ENCODE measurements at regions of chr7 and their contacts with region 1.

Region 1: DNA sequence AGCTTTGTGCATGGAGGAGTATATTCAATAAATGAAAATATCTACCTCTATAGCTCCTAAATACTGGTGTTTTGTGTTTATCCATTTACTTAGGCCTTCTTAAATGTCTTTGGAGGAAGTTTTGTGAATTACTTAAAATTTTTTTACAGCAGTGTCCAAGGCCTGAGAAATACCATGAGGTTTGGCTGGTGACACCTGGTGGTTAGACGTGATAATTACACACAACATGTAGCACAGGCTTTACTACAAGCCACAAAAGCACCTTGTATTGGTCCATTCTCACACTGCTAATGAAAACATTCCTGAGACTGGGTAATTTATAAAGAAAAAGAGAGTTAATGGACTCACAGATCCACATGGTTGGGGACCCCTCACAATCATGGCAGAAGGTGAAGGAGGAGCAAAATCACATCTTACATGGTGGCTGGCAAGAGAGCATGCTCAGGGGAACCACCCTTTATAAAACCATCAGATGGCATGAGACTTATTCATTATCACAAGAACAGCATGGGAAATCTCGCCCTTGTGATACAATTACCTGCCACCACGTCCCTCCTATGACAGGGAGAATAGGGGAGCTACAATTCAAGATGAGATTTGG is 20.6 kb downstream of the HYAL4 start:
- DNase-seq: peak; percentile 78
- H3K4me3 ChIP-seq: no peak overlapping the region
- H3K27ac ChIP-seq: peak overlapping the region; percentile 67
- H3K4me1 ChIP-seq: no peaks in the 10 kb centered on the region
- H3K27me3 ChIP-seq: no peaks in the 10 kb centered on the region
- CTCF ChIP-seq: peak; percentile 73

Region 2: GRCh38 chr7:123494193-123494796 is 371.3 kb before region 1 on chr7:
- intact Hi-C with region 1: loop called (anchors 10 kb)
- DNase-seq: peak; percentile 31
- H3K4me3 ChIP-seq: no peak overlapping the region
- H3K27ac ChIP-seq: no peak overlapping the region
- H3K4me1 ChIP-seq: no peaks in the 10 kb centered on the region
- H3K27me3 ChIP-seq: no peaks in the 10 kb centered on the region
- CTCF ChIP-seq: peak; percentile 63

Region 3: DNA sequence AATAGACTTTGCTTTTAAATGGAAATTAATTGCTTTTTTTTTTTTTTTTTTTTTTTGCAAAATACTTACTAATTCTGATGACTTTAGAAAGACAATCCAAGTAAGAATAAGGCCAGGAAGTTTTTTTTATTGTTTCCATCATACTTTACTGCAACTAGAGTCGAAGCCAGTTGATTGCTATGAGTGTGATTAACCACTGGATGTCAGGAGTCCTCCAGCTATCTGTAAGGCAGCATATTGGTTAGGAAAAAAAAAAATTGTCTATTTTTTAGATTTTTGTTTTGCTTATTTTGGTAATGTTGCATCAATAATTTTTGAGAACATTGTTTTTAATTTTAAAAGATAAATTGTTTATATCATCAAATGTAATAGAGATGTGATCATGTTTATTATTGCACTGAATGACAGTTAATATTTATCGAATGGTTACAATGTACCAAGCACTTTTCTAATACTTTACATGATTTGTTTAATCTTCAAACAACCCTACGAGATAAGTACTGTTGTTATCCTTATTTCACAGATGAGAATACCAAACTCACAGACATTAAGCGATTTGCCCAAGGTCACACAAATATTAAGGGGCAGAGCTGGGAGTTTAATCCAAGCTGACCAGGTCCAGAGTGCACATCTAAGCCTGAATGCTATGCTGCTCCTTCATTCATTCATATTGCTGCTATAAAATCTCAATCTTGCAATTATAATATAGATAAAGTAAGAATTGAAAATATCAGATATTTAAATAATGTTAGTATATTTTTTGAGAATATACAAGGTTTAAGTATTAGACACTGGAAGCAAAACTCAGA is 229.9 kb before region 1 on chr7:
- intact Hi-C with region 1: loop called (anchors 5 kb)
- DNase-seq: no peak
- H3K4me3 ChIP-seq: no peak overlapping the region
- H3K27ac ChIP-seq: no peak overlapping the region
- H3K4me1 ChIP-seq: no peaks in the 10 kb centered on the region
- H3K27me3 ChIP-seq: peaks cover 3% of the 10 kb centered on the region
- CTCF ChIP-seq: peak; percentile 18

Region 4: DNA sequence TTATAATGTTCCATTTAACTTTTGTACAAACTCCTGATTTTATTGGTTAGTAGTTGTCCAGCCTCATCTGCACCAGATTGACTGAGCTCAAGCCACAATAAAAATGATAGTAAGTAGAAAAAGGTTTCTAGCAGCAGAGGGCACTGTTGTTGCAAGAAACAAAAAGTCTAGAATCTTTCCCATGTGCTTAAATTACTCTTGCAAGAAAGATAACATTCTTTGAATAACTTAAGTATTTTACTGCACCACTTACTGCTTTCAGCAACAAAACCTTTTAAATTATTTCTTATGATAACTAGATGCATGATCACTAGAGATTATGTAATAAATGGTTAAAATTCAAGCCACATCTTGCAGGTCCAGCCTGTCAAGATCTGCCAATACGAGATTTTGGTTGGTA is 182.9 kb before region 1 on chr7:
- intact Hi-C with region 1: loop called (anchors 5 kb)
- DNase-seq: peak; percentile 36
- H3K4me3 ChIP-seq: no peak overlapping the region
- H3K27ac ChIP-seq: no peak overlapping the region
- H3K4me1 ChIP-seq: no peaks in the 10 kb centered on the region
- H3K27me3 ChIP-seq: no peaks in the 10 kb centered on the region
- CTCF ChIP-seq: peak; percentile 48

Region 5: GRCh38 chr7:123805287-123805686 is 60.3 kb before region 1 on chr7:
- intact Hi-C with region 1: loop called (anchors 5 kb)
- DNase-seq: no peak
- H3K4me3 ChIP-seq: no peak overlapping the region
- H3K27ac ChIP-seq: no peak overlapping the region
- H3K4me1 ChIP-seq: no peaks in the 10 kb centered on the region
- H3K27me3 ChIP-seq: no peaks in the 10 kb centered on the region
- CTCF ChIP-seq: no peak